ENCODE measurements at regions of chr5 and their contacts with region 1.

Region 1: DNA sequence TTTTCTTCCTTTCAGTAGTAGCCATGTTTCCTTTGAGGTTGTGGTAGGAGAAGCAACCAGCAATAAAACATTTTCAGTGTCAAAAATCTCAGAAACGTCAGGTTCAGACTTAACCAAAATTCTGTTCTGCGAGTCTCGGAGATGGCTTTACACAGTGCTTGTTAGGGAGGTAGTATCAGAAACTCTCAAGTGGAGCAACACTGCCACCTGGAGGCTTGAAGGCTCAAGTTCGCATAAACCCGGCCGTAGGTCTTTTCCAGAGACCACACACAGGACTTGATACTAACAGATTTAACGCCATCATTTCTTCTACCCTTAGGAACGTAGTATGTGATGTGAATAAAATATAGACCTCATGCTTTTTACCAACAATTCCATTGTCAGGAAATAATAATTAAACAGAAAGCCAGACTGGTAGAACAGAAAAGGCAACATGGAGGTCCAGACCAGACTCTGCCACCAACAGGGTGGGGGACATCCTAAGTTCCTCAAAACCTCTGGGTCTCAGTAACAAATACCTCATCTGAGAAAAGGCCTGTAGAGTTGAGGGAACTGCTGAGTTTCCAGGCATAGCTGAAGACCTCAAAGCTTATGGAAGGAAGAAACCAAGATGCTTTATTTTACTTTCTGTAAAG is 8.5 kb downstream of the PTGER4 start:
- DNase-seq: peak; percentile 67
- H3K4me3 ChIP-seq: no peak overlapping the region
- H3K27ac ChIP-seq: peak overlapping the region; percentile 68
- H3K4me1 ChIP-seq: peaks cover 32% of the 10 kb centered on the region
- H3K27me3 ChIP-seq: no peaks in the 10 kb centered on the region
- CTCF ChIP-seq: peak; percentile 69 to 83

Region 2: DNA sequence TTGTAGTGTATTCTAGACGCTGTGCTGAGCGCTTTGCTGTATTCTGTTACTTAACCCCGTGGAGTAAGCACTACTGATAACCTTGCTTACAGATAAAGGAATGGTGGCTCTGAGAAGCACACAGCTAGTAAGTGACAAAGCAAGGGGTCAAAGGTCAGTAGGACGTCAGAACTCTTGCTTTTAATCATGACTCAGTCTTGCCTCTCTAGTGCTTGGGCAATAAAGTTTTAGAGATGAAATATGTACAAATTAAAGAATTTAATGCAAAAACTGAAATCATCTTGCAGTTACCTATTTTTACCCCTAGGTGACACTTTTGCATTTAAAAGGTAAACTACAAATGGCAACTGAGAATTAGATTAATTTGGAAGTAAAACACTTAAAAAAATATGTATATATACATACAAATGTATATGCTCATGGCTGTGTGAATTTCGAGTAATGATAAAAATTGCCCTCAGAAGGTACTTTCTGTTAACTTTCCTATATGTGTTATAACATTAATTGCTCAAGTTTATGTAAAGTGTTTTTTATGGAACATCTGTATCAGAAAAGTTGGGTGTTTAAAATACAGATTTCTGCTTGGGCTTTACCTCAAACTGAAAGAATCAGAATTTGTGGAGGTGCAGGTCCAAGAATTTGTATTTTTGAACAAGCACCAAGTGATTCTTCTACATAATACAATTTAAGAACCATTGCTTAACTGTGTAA is 1088.4 kb before region 1 on chr5:
- CTCF ChIA-PET with region 1: no interaction called
- dilution Hi-C with region 1: no loop called
- in situ Hi-C with region 1: loop called in 1 of 2 experiments (anchors 25 kb)
- intact Hi-C with region 1: no loop called
- DNase-seq: peak; percentile 42
- H3K4me3 ChIP-seq: no peak overlapping the region
- H3K27ac ChIP-seq: no peak overlapping the region
- H3K4me1 ChIP-seq: no peaks in the 10 kb centered on the region
- H3K27me3 ChIP-seq: no peaks in the 10 kb centered on the region
- CTCF ChIP-seq: peak; percentile 67 to 72

Region 3: DNA sequence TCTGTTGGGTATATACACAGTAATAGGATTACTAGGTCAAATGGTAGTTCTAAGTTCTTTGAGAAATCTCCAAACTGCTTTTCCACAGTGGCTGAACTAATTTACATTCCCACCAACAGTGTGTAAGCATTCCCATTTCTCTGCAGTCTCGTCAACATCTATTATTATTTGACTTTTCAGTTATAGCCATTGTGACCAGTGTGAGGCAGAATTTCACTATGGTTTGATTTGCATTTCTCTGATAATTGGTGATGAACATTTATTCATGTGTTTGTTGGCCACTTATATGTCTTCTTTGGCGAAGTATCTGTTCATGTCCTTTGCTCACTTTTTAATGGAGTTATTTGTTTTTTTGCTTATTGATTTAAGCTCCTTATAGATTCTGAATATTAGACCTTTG is 667.2 kb before region 1 on chr5:
- CTCF ChIA-PET with region 1: no interaction called
- dilution Hi-C with region 1: no loop called
- in situ Hi-C with region 1: no loop called
- intact Hi-C with region 1: loop called (anchors 5 kb)
- DNase-seq: no peak
- H3K4me3 ChIP-seq: no peak overlapping the region
- H3K27ac ChIP-seq: no peak overlapping the region
- H3K4me1 ChIP-seq: peaks cover 4% of the 10 kb centered on the region
- H3K27me3 ChIP-seq: no peaks in the 10 kb centered on the region
- CTCF ChIP-seq: no peak

Region 4: DNA sequence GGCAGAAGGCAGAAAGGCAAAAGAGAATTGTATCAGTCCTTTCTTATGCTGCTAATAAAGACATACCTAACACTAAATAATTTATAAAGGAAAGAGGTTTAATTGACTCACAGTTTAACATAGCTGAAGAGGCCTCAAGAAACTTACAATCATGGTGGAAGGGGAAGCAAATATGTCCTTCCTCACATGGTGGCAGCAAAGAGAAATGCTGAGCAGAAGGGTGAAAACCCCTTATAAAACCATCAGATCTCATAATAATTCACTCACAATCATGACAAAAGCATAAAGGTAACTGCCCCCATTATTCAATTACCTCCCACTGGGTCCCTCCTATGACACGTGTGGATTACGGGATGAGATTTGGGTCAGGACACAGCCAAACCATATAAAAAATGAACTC is 321.0 kb before region 1 on chr5:
- CTCF ChIA-PET with region 1: no interaction called
- dilution Hi-C with region 1: no loop called
- in situ Hi-C with region 1: no loop called
- intact Hi-C with region 1: loop called (anchors 1 kb)
- DNase-seq: no peak
- H3K4me3 ChIP-seq: no peak overlapping the region
- H3K27ac ChIP-seq: no peak overlapping the region
- H3K4me1 ChIP-seq: no peaks in the 10 kb centered on the region
- H3K27me3 ChIP-seq: no peaks in the 10 kb centered on the region
- CTCF ChIP-seq: peak in 1 of 2 donors; percentile 37

Region 5: DNA sequence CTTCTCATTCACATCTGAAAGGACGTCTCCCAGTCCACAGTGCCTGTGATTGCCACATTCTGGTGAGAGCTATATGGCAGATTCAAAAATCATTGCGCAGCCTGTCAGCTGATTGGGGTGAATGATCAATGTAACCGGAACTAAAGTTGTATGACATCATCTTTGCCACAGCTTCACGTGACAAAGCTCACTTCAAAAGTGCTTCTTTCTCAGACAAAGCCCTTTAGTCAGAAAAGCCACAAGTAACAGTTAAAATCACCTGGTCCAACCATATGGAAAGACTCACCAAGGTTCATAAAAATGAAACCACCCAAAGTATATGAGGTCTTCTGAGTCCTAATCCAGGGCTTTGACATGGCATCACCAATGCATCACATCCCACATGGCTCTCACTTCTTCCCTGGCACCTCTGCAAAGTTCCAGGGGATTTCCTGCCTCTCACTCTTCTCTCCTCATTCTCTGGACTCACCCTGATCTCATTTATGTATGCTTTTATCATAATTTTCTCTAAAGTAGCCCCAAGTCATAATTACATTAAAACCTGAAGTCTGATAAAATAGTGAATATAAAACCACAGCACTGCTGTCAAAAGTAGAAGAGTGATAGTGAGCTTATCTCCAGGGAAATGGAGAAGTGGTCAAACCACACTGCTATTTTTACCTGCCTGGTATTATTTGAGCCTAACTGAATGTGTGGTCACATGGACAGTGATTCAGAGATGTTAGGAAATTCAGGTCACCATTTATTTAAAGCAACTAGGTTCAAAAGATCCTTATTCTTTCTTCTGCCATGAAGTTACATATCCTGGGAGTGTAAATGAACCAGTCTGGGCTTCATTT is 201.6 kb before region 1 on chr5:
- CTCF ChIA-PET with region 1: no interaction called
- dilution Hi-C with region 1: no loop called
- in situ Hi-C with region 1: loop called in 1 of 2 experiments (anchors 10 kb)
- intact Hi-C with region 1: no loop called
- DNase-seq: peak; percentile 81
- H3K4me3 ChIP-seq: no peak overlapping the region
- H3K27ac ChIP-seq: peak overlapping the region; percentile 39
- H3K4me1 ChIP-seq: peaks cover 14% of the 10 kb centered on the region
- H3K27me3 ChIP-seq: no peaks in the 10 kb centered on the region
- CTCF ChIP-seq: no peak

Region 6: DNA sequence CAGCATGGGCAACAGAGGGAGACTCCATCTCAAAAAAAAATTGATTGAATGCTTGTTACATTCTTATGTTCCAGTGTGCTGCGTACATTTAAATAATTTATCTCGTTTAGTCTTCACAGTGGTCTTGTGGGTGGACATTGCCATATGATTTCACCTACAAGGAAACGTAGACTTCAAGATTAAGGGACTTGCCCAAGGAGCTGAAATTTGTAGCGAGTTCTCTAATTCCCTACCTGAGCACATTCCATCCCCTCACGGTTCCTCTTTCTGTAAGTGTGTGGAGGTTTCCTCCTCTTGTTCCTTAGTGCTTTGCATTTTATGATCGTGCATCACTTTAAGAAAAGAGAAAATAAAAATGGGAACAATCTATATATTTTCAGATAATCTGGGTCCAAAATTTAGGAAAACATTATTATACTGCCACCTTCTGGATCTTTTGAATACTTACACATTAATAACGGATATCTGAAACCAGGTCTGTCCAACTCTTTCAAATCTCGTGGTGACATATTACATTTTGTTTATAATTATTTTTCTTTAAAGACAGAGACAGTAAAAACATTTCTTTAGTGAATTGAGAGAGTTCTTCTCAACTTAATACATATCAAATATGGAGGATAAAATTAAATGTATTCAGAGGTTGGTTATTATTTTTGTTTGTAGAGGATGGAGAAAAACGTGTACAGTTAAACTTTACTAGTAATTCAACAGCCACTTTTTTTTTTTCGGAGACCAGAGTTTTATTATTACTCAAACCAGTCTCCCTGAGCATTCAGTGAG is 191.1 kb after region 1 on chr5:
- CTCF ChIA-PET with region 1: no interaction called
- dilution Hi-C with region 1: no loop called
- in situ Hi-C with region 1: no loop called
- intact Hi-C with region 1: loop called (anchors 2 kb)
- DNase-seq: peak; percentile 13
- H3K4me3 ChIP-seq: no peak overlapping the region
- H3K27ac ChIP-seq: no peak overlapping the region
- H3K4me1 ChIP-seq: no peaks in the 10 kb centered on the region
- H3K27me3 ChIP-seq: no peaks in the 10 kb centered on the region
- CTCF ChIP-seq: peak; percentile 42 to 49

Measured in mammary epithelial cell (primary cell).